ENCODE measurements at regions of chr2 and their contacts with region 1.

Region 1: DNA sequence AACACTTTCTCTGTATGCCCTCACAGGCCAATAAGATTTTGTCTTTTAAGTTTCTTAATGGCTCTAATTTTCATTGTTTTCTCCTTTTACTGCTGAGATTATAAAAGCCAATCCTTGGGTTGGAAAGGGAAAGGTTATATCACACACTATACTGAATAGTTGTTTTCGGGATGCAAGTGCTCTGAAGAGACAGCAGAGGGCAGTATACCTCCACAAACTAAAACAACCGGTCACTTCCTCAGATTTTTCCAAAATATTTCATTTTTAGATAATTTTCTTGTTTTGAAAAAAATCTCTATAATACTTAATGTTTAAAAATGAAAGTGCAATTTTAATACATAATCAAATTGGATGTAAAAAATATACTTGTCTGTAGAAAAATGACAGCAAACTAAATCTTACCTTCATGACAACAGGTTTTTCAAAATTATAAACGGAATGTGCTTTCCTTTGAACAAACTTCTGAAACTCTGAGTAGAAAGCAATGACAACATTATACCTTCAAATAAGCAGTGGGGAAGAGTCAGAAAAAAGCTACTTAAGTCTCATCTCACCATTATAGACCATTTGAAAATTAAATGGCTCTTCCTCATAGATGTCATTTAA is 82.7 kb downstream of the ORC4 start:
- DNase-seq: no peak
- H3K4me3 ChIP-seq: no peak overlapping the region
- H3K27ac ChIP-seq: no peak overlapping the region
- H3K27me3 ChIP-seq: no peaks in the 10 kb centered on the region
- CTCF ChIP-seq: peak; percentile 75 to 99 (median 90)

Region 2: DNA sequence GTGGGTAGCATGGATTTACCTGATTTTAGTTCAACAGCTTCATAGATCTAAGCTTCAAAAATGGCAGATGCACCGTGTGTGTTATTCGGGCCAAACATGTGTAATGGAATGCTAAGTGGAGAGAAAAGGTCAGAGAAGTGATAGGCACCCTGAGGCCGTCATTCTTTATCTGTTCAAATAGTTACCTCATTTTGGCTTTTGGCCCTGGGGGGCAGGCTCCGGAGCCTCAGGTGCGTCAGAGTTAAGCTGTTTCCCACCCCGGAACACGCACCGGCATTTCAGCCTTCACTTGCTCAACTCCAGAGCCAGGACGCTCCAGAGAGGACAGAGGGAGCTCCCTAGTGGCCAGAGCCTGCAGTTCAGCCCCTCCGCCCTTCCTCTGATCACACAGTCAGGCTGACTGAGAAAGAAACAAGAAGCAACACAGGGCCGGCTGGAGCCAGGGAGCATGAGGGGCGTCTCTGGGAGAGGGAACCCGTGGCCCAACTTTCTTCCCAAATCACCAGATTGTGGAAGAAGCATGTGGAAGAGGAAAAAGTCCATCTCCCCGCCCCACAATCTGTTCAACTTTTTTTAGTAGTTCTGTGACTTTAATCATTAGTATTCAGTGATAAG is 571.5 kb after region 1 on chr2:
- intact Hi-C with region 1: loop called (anchors 2 to 5 kb)
- DNase-seq: peak; percentile 44 to 84 (median 76)
- H3K4me3 ChIP-seq: peak overlapping the region in 47 of 59 donors; percentile 9 to 59 (median 39)
- H3K27ac ChIP-seq: no peak overlapping the region
- H3K27me3 ChIP-seq: no peaks in the 10 kb centered on the region
- CTCF ChIP-seq: peak in 55 of 56 donors; percentile 48 to 88 (median 76)

Measured in dorsolateral prefrontal cortex (tissue), 120 donors.